Vagina (tissue), 2 donors: ENCODE measurements at regions of chr6 and their contacts with region 1.

Region 1: DNA sequence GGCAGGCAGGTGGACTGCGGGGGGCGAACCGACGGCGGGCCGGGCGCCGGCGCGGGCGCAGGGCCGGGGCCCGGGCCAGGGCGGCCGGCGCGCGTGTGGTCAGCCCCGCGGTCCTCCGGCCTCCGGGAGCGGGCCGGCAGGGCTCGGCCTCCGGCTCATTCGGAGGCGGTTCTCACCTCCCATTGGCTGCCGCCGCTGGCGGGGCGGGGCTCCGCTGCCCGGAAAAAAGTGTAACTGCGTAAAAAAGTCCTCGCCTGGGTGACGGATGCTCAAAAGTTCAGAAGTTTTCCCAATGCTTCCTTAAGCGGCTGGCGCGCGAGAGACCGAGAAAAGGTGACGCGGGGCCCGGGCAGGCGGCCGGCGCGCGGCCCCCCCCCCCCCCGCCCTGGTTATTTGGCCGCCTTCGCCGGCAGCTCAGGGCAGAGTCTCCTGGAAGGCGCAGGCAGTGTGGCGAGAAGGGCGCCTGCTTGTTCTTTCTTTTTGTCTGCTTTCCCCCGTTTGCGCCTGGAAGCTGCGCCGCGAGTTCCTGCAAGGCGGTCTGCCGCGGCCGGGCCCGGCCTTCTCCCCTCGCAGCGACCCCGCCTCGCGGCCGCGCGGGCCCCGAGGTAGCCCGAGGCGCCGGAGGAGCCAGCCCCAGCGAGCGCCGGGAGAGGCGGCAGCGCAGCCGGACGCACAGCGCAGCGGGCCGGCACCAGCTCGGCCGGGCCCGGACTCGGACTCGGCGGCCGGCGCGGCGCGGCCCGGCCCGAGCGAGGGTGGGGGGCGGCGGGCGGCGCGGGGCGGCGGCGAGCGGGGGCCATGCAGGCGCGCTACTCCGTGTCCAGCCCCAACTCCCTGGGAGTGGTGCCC is at the start of gene FOXC1:
- DNase-seq: no peak
- H3K4me3 ChIP-seq: peak within 1 kb of the TSS; percentile 59 to 72
- H3K27ac ChIP-seq: peak within 1 kb of the TSS; percentile 79
- H3K4me1 ChIP-seq: peaks cover 56% of the 10 kb centered on the region
- H3K27me3 ChIP-seq: peaks cover 39% of the 10 kb centered on the region
- CTCF ChIP-seq: no peak
- POLR2A ChIP-seq: no peak
- total RNA-seq, gene FOXC1: 9.8 TPM

Region 2: DNA sequence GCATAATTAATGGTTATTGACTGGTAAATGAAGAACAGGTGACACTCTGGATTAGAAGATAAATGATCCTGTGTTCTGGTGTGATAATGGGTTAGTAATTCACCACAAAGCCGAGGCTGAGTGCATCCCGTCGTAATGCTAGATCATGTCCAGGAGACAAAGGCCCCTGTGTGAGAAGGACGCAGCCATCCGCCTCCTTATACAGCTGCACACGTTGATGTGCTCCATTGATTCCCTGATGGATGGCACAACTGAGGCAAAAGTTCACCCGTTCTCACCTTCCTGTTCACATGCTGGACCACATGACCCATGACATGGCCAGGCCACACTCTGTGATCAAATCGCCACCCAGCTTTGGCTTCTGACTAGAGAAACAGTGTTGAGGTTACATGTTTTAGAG is 135.9 kb after region 1 on chr6:
- intact Hi-C with region 1: no loop called
- DNase-seq: no peak
- H3K4me3 ChIP-seq: no peak overlapping the region
- H3K27ac ChIP-seq: no peak overlapping the region
- H3K4me1 ChIP-seq: no peaks in the 10 kb centered on the region
- H3K27me3 ChIP-seq: no peaks in the 10 kb centered on the region
- CTCF ChIP-seq: no peak
- POLR2A ChIP-seq: no peak

Region 3: GRCh38 chr6:1917626-1918371 is 307.9 kb after region 1 on chr6:
- intact Hi-C with region 1: loop called (anchors 10 kb)
- DNase-seq: no peak
- H3K4me3 ChIP-seq: no peak overlapping the region
- H3K27ac ChIP-seq: no peak overlapping the region
- H3K4me1 ChIP-seq: no peaks in the 10 kb centered on the region
- H3K27me3 ChIP-seq: no peaks in the 10 kb centered on the region
- CTCF ChIP-seq: no peak
- POLR2A ChIP-seq: no peak

Region 4: GRCh38 chr6:2196079-2196679 is 586.3 kb after region 1 on chr6:
- intact Hi-C with region 1: loop called (anchors 10 kb)
- DNase-seq: no peak
- H3K4me3 ChIP-seq: no peak overlapping the region
- H3K27ac ChIP-seq: no peak overlapping the region
- H3K4me1 ChIP-seq: peaks cover 13% of the 10 kb centered on the region
- H3K27me3 ChIP-seq: no peaks in the 10 kb centered on the region
- CTCF ChIP-seq: peak in 2 of 3 experiments; percentile 61 to 68
- POLR2A ChIP-seq: no peak

Region 5: DNA sequence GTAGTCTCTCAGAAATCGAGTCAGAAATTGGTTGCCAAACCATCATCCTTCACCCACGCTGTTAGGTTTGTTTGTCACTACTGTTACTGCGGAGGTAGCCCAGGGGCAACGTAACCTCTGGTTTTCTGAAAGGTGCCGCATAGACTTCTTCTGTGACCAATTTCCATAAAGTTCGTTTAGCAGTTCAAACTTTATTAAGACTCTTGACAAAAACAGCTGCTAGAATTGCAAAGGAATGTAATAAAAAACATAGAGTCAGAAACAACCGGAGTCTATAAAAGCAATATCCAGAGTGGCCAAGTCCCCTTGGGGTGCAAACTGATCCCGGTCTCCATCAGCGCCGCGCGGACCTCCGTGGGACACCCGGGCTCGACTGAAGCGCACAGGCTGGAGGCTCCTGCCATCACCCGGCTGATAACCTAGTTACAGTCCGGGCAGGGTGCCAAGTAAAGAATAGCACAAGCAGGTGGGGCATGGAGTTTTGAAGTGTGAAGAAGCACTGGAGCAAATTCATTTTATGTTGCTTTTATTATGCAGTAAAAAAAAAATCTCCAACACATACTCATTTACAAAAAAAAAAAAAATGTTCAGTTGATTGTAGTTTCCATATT is 840.6 kb after region 1 on chr6:
- intact Hi-C with region 1: loop called (anchors 10 kb)
- DNase-seq: no peak
- H3K4me3 ChIP-seq: no peak overlapping the region
- H3K27ac ChIP-seq: no peak overlapping the region
- H3K4me1 ChIP-seq: peaks cover 15% of the 10 kb centered on the region
- H3K27me3 ChIP-seq: no peaks in the 10 kb centered on the region
- CTCF ChIP-seq: no peak
- POLR2A ChIP-seq: no peak